Heart right ventricle (tissue), 16 donors: ENCODE measurements at regions of chr2 and their contacts with region 1.

Region 1: GRCh38 chr2:46893269-46893945 is 22.2 kb downstream of the MCFD2 start:
- DNase-seq: no peak
- ATAC-seq: peak in 1 of 8 donors; percentile 45
- H3K4me3 ChIP-seq: no peak overlapping the region
- H3K27ac ChIP-seq: no peak overlapping the region
- H3K4me1 ChIP-seq: peaks cover 0 to 11% (median 4%) of the 10 kb centered on the region in 9 donors
- H3K27me3 ChIP-seq: no peaks in the 10 kb centered on the region
- CTCF ChIP-seq: no peak

Region 2: DNA sequence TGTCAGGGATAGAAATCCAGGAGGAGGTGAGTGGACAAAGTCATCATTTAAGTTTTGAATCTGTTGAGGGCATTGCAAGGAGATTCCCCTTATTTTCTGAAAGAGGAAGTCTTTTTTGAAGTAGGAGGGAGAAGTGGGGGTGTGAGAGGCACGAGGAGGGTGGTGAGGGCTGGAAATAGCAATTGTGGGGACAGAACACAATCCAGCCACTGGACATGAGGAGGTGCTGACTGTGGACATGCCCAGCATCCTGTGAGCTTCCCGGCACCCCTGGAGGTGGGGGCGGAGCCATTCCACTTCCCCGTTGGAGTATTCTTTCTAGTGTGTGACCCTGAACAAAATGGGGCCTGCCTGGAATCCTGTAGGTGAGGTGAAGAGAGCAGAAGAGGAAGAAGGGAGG is 906.9 kb before region 1 on chr2:
- intact Hi-C with region 1: loop called in 1 of 10 experiments (anchors 10 kb)
- DNase-seq: peak in 1 of 2 donors; percentile 15
- ATAC-seq: peak in 6 of 8 donors; percentile 30 to 60 (median 37)
- H3K4me3 ChIP-seq: no peak overlapping the region
- H3K27ac ChIP-seq: peak overlapping the region in 1 of 10 donors; percentile 44
- H3K4me1 ChIP-seq: peaks cover 0 to 31% (median 0%) of the 10 kb centered on the region in 9 donors
- H3K27me3 ChIP-seq: no peaks in the 10 kb centered on the region
- CTCF ChIP-seq: no peak

Region 3: GRCh38 chr2:46002507-46002883 is 890.9 kb before region 1 on chr2:
- intact Hi-C with region 1: loop called in 1 of 10 experiments (anchors 10 kb)
- DNase-seq: no peak
- ATAC-seq: peak; percentile 30 to 57 (median 44)
- H3K4me3 ChIP-seq: no peak overlapping the region
- H3K27ac ChIP-seq: peak overlapping the region in 8 of 10 donors; percentile 6 to 60 (median 37)
- H3K4me1 ChIP-seq: peaks cover 0 to 31% (median 18%) of the 10 kb centered on the region in 9 donors
- H3K27me3 ChIP-seq: no peaks in the 10 kb centered on the region
- CTCF ChIP-seq: no peak

Region 4: DNA sequence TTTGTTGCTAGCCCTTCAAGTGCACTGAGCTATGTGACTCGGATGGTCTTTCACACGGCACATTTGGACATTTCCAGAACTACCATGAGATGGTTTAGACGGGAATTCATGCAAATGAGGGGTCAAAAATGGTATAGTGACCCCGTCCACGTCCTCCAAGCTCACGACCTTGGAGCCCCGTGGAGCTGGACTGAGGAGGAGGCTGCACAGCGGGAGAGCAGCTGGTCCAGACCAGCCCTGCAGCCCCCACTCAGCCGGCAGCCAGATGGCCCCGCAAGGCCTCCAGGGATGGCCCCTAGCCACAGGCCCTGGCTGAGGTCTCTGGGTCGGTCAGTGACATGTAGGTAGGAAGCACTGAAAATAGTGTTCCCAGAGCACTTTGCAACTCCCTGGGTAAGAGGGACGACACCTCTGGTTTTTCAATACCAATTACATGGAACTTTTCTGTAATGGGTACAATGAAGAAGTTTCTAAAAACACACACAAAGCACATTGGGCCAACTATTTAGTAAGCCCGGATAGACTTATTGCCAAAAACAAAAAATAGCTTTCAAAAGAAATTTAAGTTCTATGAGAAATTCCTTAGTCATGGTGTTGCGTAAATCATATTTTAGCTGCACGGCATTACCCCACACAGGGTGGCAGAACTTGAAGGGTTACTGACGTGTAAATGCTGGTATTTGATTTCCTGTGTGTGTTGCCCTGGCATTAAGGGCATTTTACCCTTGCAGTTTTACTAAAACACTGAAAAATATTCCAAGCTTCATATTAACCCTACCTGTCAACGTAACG is 507.4 kb before region 1 on chr2:
- intact Hi-C with region 1: loop called in 1 of 10 experiments (anchors 10 kb)
- DNase-seq: no peak
- ATAC-seq: peak in 1 of 8 donors; percentile 9
- H3K4me3 ChIP-seq: no peak overlapping the region
- H3K27ac ChIP-seq: peak overlapping the region in 5 of 10 donors; percentile 1 to 68 (median 33)
- H3K4me1 ChIP-seq: peaks cover 0 to 40% (median 15%) of the 10 kb centered on the region in 9 donors
- H3K27me3 ChIP-seq: no peaks in the 10 kb centered on the region
- CTCF ChIP-seq: no peak

Region 5: DNA sequence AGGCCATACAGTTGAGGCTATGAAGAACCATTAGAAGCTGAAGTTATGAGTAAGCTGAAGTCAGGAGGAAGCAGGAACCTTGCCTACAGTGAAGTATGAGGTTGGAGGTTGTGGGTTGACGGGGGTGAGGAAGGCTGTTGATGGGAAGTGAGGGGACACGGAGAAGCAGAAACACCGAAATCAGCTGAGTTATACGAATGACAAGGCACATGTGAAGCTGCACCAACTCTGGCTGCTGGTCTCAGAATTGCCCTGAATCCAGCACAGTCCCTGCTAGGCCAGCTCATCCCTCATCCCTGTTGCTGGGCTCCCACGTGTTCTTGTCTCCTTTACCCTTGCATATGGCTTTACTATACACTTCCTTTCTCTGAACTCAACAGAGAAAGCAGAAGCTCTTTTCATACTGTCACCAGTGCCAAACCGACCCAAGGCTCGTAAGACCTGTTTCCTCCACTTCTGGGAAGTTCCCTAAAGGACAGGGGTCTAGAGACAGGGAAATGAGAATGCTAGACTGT is 423.2 kb before region 1 on chr2:
- intact Hi-C with region 1: loop called in 1 of 10 experiments (anchors 5 kb)
- DNase-seq: no peak
- ATAC-seq: peak in 7 of 8 donors; percentile 33 to 77 (median 61)
- H3K4me3 ChIP-seq: no peak overlapping the region
- H3K27ac ChIP-seq: peak overlapping the region in 1 of 10 donors; percentile 57
- H3K4me1 ChIP-seq: peaks cover 0 to 19% (median 0%) of the 10 kb centered on the region in 9 donors
- H3K27me3 ChIP-seq: no peaks in the 10 kb centered on the region
- CTCF ChIP-seq: no peak

Region 6: DNA sequence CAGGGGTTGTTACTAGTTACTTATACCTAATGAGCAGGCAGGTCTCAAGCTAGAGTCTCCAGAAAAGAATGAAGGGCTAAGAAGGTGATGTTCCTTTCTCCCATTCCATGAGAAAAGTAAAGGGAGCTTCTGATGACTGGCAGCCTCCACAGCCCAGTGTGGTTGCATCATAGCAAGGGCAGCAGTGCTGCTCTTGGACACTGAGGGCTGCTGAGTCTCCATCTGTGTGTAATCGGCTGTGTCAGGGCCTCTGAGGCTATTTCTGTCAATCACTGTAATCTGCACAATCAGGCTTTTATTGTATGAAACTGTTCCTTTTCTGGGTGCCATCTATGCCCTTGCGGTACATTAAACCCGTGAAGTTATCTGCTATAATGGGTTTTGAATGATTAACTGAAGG is 1177.0 kb after region 1 on chr2:
- intact Hi-C with region 1: no loop called
- DNase-seq: no peak
- ATAC-seq: peak in 2 of 8 donors; percentile 41 to 49
- H3K4me3 ChIP-seq: no peak overlapping the region
- H3K27ac ChIP-seq: no peak overlapping the region
- H3K4me1 ChIP-seq: no peaks in the 10 kb centered on the region
- H3K27me3 ChIP-seq: peaks cover 0 to 3% (median 0%) of the 10 kb centered on the region in 7 donors
- CTCF ChIP-seq: no peak